ENCODE measurements at regions of chr1 and their contacts with region 1.

Region 1: GRCh38 chr1:22105611-22106207 is 37.2 kb downstream of the WNT4 start:
- DNase-seq: peak in 5 of 9 experiments; percentile 29 to 74 (median 49)
- ATAC-seq: peak; percentile 73
- H3K4me3 ChIP-seq: no peak overlapping the region
- H3K4me3 Mint-ChIP-seq: peak overlapping the region; percentile 16
- H3K27ac ChIP-seq: peak overlapping the region; percentile 21 to 58
- H3K27ac Mint-ChIP-seq: peak overlapping the region; percentile 81
- H3K4me1 ChIP-seq: peaks cover 41% of the 10 kb centered on the region
- H3K4me1 Mint-ChIP-seq: peaks cover 67% of the 10 kb centered on the region
- H3K27me3 ChIP-seq: no peaks in the 10 kb centered on the region
- H3K27me3 Mint-ChIP-seq: no peaks in the 10 kb centered on the region
- CTCF ChIP-seq: peak; percentile 91

Region 2: DNA sequence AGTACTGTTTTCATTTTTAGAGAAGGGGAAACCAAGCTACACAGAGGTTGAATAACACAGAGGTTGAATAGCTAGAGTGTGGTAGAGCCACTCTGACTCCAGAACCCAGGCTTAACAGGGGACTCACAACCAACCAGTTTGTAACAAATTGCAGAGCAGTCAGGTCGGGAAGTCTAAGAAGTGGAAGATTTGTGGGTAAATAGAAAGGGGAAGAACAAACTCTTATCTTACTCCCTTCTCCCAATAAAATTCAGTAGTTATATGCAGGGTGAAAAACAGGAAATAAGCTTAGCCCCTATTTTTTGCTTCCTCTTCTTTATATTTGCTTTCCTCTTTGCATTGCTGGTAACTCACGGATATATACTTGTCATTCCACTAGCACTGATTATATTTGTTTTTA is 30.0 kb before region 1 on chr1:
- CTCF ChIA-PET with region 1: interaction called, 15 read pairs
- POLR2A ChIA-PET with region 1: interaction called, 3 read pairs
- intact Hi-C with region 1: no loop called
- DNase-seq: no peak
- ATAC-seq: no peak
- H3K4me3 ChIP-seq: no peak overlapping the region
- H3K4me3 Mint-ChIP-seq: peak overlapping the region; percentile 68
- H3K27ac ChIP-seq: peak overlapping the region in 1 of 2 experiments; percentile 41
- H3K27ac Mint-ChIP-seq: peak overlapping the region; percentile 86
- H3K4me1 ChIP-seq: peaks cover 85% of the 10 kb centered on the region
- H3K4me1 Mint-ChIP-seq: peaks cover 86% of the 10 kb centered on the region
- H3K27me3 ChIP-seq: no peaks in the 10 kb centered on the region
- H3K27me3 Mint-ChIP-seq: no peaks in the 10 kb centered on the region
- CTCF ChIP-seq: no peak

Region 3: GRCh38 chr1:22089787-22090186 is 15.9 kb before region 1 on chr1:
- CTCF ChIA-PET with region 1: interaction called, 16 read pairs
- POLR2A ChIA-PET with region 1: interaction called, 6 read pairs
- intact Hi-C with region 1: loop called in 1 of 2 experiments (anchors 2 kb)
- DNase-seq: peak in 1 of 9 experiments; percentile 33
- ATAC-seq: no peak
- H3K4me3 ChIP-seq: peak overlapping the region in 1 of 2 experiments; percentile 13
- H3K4me3 Mint-ChIP-seq: peak overlapping the region; percentile 71
- H3K27ac ChIP-seq: peak overlapping the region; percentile 6 to 46
- H3K27ac Mint-ChIP-seq: peak overlapping the region; percentile 76
- H3K4me1 ChIP-seq: peaks cover 67% of the 10 kb centered on the region
- H3K4me1 Mint-ChIP-seq: peaks cover 87% of the 10 kb centered on the region
- H3K27me3 ChIP-seq: no peaks in the 10 kb centered on the region
- H3K27me3 Mint-ChIP-seq: no peaks in the 10 kb centered on the region
- CTCF ChIP-seq: no peak

Region 4: GRCh38 chr1:22117851-22118250 is 12.1 kb after region 1 on chr1:
- CTCF ChIA-PET with region 1: interaction called, 14 read pairs
- POLR2A ChIA-PET with region 1: interaction called, 4 read pairs
- intact Hi-C with region 1: no loop called
- DNase-seq: no peak
- ATAC-seq: no peak
- H3K4me3 ChIP-seq: no peak overlapping the region
- H3K4me3 Mint-ChIP-seq: no peak overlapping the region
- H3K27ac ChIP-seq: no peak overlapping the region
- H3K27ac Mint-ChIP-seq: peak overlapping the region; percentile 60
- H3K4me1 ChIP-seq: no peaks in the 10 kb centered on the region
- H3K4me1 Mint-ChIP-seq: peaks cover 22% of the 10 kb centered on the region
- H3K27me3 ChIP-seq: no peaks in the 10 kb centered on the region
- H3K27me3 Mint-ChIP-seq: no peaks in the 10 kb centered on the region
- CTCF ChIP-seq: no peak

Region 5: DNA sequence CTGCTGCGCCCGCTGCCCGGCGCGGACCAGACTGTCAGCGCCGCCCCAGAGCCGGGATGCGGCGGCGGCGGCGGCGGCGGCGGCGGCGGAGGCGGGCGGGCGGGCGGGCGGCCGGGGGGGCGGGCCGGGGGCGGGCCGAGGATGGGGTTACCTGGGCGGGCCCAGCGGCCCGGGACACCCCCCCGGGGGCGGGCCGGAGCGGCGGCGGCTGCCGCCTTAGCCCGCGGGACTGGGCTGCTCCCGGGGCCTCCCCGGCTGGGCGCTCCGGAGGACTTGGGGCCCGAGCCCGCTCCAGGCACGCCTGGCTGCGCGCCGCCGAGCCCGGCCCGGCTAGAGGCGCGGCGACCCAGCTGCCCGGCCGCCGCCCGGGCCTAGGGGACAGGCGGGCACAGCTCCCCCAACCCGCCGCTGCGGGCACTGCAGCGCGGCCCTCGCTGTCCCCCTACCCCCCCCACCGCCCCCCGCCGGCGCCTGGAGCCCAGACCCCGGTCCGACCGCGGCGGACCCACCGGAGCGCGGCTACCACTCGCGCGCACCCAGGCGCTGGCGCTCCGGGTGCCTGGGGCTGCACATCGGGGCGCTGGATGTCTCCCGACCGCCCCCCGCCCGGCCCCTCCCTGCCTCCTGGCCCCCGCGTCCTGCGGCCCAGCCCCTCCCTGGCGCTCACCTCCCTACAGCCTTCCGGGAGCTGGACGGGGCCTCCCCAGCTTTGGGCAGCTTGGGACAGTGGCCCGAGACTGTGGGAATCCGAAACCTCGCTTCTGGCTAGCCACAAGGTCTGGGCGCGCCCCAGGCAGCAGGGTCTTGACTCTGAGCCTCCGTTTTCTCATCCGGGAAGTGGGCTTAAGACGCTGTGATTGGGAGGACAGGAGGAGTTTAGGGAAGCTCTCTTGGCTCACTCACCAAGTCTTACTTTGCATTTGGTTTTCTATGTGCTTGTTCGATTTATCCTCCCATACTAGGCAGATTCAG is 37.6 kb after region 1 on chr1 and contains the start of gene WNT4:
- CTCF ChIA-PET with region 1: no interaction called
- POLR2A ChIA-PET with region 1: no interaction called
- intact Hi-C with region 1: loop called in 1 of 2 experiments (anchors 1 kb)
- DNase-seq: peak in 4 of 9 experiments; percentile 4 to 60 (median 45)
- ATAC-seq: peak; percentile 79
- H3K4me3 ChIP-seq: peak within 1 kb of the TSS in 1 of 2 experiments; percentile 30
- H3K4me3 Mint-ChIP-seq: peak within 1 kb of the TSS; percentile 78
- H3K27ac ChIP-seq: no peak within 1 kb of the TSS
- H3K27ac Mint-ChIP-seq: no peak within 1 kb of the TSS
- H3K4me1 ChIP-seq: peaks cover 7% of the 10 kb centered on the region
- H3K4me1 Mint-ChIP-seq: peaks cover 8% of the 10 kb centered on the region
- H3K27me3 ChIP-seq: peaks cover 14 to 23% of the 10 kb centered on the region in 2 experiments
- H3K27me3 Mint-ChIP-seq: peaks cover 56% of the 10 kb centered on the region
- CTCF ChIP-seq: no peak
- total RNA-seq, gene WNT4: not detected

Region 6: GRCh38 chr1:22184892-22185612 is 79.3 kb after region 1 on chr1:
- CTCF ChIA-PET with region 1: no interaction called
- POLR2A ChIA-PET with region 1: no interaction called
- intact Hi-C with region 1: no loop called
- DNase-seq: peak in 3 of 9 experiments; percentile 13 to 30 (median 30)
- ATAC-seq: peak; percentile 34
- H3K4me3 ChIP-seq: no peak overlapping the region
- H3K4me3 Mint-ChIP-seq: no peak overlapping the region
- H3K27ac ChIP-seq: no peak overlapping the region
- H3K27ac Mint-ChIP-seq: no peak overlapping the region
- H3K4me1 ChIP-seq: no peaks in the 10 kb centered on the region
- H3K4me1 Mint-ChIP-seq: no peaks in the 10 kb centered on the region
- H3K27me3 ChIP-seq: no peaks in the 10 kb centered on the region
- H3K27me3 Mint-ChIP-seq: peaks cover 44% of the 10 kb centered on the region
- CTCF ChIP-seq: no peak

Region 7: GRCh38 chr1:22259551-22260282 is 154.0 kb after region 1 on chr1:
- CTCF ChIA-PET with region 1: no interaction called
- POLR2A ChIA-PET with region 1: no interaction called
- intact Hi-C with region 1: no loop called
- DNase-seq: no peak
- ATAC-seq: no peak
- H3K4me3 ChIP-seq: no peak overlapping the region
- H3K4me3 Mint-ChIP-seq: no peak overlapping the region
- H3K27ac ChIP-seq: no peak overlapping the region
- H3K27ac Mint-ChIP-seq: no peak overlapping the region
- H3K4me1 ChIP-seq: no peaks in the 10 kb centered on the region
- H3K4me1 Mint-ChIP-seq: no peaks in the 10 kb centered on the region
- H3K27me3 ChIP-seq: no peaks in the 10 kb centered on the region
- H3K27me3 Mint-ChIP-seq: peaks cover 20% of the 10 kb centered on the region
- CTCF ChIP-seq: no peak

Region 8: GRCh38 chr1:22416555-22417454 is 311.1 kb after region 1 on chr1:
- CTCF ChIA-PET with region 1: interaction called, 4 read pairs
- POLR2A ChIA-PET with region 1: no interaction called
- intact Hi-C with region 1: loop called (anchors 1 kb)
- DNase-seq: peak; percentile 42 to 83 (median 75)
- ATAC-seq: peak; percentile 87
- H3K4me3 ChIP-seq: no peak overlapping the region
- H3K4me3 Mint-ChIP-seq: no peak overlapping the region
- H3K27ac ChIP-seq: no peak overlapping the region
- H3K27ac Mint-ChIP-seq: no peak overlapping the region
- H3K4me1 ChIP-seq: peaks cover 5% of the 10 kb centered on the region
- H3K4me1 Mint-ChIP-seq: peaks cover 7% of the 10 kb centered on the region
- H3K27me3 ChIP-seq: peaks cover 4 to 9% of the 10 kb centered on the region in 2 experiments
- H3K27me3 Mint-ChIP-seq: peaks cover 41% of the 10 kb centered on the region
- CTCF ChIP-seq: peak; percentile 73

Region 9: DNA sequence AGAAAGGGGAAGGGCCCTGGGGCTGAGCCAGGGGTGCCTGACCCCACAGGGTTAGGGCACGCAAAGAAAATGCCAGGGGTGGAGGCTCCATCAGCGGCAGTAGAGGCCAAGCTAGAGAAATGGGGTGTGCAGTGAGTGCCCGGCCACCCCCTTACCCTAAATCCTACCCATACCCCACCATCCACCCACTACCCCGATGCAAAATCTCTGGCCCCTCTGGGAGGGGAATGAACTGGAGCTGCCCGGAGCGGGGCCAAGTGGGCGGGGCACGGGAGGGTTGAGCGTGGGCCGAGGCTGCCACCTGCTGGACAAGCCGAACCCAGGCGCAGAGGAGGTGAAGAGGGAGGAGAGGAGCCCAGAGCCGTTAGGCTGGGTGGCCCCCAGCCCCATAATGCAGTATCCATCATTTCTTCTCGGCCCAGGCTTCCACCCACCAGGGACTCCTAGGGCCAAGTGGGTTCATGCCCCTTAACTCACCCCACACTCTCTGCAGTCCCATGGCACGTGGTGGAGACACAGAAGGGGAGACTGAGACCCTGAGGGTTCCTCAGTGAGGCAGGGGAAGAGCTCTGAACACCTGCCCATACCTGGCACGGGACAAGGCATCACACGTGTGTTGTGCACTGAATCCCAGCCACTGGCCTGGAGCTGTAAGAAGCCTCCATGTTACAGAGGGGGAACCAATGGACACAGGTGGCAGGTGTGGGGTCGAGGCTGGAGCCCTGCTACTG is 536.4 kb after region 1 on chr1:
- CTCF ChIA-PET with region 1: interaction called, 3 read pairs
- POLR2A ChIA-PET with region 1: no interaction called
- intact Hi-C with region 1: loop called in 1 of 2 experiments (anchors 1 kb)
- DNase-seq: peak; percentile 42 to 79 (median 66)
- ATAC-seq: peak; percentile 57
- H3K4me3 ChIP-seq: no peak overlapping the region
- H3K4me3 Mint-ChIP-seq: no peak overlapping the region
- H3K27ac ChIP-seq: no peak overlapping the region
- H3K27ac Mint-ChIP-seq: no peak overlapping the region
- H3K4me1 ChIP-seq: no peaks in the 10 kb centered on the region
- H3K4me1 Mint-ChIP-seq: no peaks in the 10 kb centered on the region
- H3K27me3 ChIP-seq: peaks cover 0 to 11% of the 10 kb centered on the region in 2 experiments
- H3K27me3 Mint-ChIP-seq: peaks cover 19% of the 10 kb centered on the region
- CTCF ChIP-seq: peak; percentile 59